A673 (cell line): ENCODE measurements at regions of chr9 and their contacts with region 1.

Region 1: GRCh38 chr9:104104360-104104759 is 10.3 kb downstream of the SMC2 start:
- DNase-seq: no peak
- H3K4me3 ChIP-seq: no peak overlapping the region
- H3K27ac ChIP-seq: no peak overlapping the region
- H3K4me1 ChIP-seq: no peaks in the 10 kb centered on the region
- H3K27me3 ChIP-seq: no peaks in the 10 kb centered on the region
- CTCF ChIP-seq: no peak

Region 2: GRCh38 chr9:103837940-103838339 is 266.4 kb before region 1 on chr9:
- CTCF ChIA-PET with region 1: no interaction called
- POLR2A ChIA-PET with region 1: no interaction called
- intact Hi-C with region 1: no loop called
- DNase-seq: no peak
- H3K4me3 ChIP-seq: no peak overlapping the region
- H3K27ac ChIP-seq: no peak overlapping the region
- H3K4me1 ChIP-seq: no peaks in the 10 kb centered on the region
- H3K27me3 ChIP-seq: no peaks in the 10 kb centered on the region
- CTCF ChIP-seq: no peak

Region 3: DNA sequence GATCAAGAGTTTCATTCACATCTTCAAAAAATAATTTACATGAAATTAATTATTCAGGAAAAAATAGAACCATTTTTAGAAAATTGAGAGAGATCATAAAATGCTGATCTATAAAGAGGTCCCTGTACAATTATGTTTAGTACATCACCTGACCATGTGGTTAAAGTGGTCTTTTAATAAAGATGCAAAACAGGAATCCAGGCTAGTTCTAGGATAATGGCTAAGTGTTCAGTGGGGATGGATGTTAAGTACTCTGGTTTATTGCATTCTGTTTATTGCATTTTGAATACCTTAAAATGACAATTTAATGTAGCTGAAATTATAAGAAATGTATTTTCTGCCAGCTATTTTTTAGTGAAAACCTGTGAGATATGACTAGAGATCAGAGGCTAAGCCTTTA is 82.3 kb before region 1 on chr9:
- CTCF ChIA-PET with region 1: no interaction called
- POLR2A ChIA-PET with region 1: no interaction called
- intact Hi-C with region 1: no loop called
- DNase-seq: no peak
- H3K4me3 ChIP-seq: no peak overlapping the region
- H3K27ac ChIP-seq: no peak overlapping the region
- H3K4me1 ChIP-seq: no peaks in the 10 kb centered on the region
- H3K27me3 ChIP-seq: no peaks in the 10 kb centered on the region
- CTCF ChIP-seq: no peak

Region 4: DNA sequence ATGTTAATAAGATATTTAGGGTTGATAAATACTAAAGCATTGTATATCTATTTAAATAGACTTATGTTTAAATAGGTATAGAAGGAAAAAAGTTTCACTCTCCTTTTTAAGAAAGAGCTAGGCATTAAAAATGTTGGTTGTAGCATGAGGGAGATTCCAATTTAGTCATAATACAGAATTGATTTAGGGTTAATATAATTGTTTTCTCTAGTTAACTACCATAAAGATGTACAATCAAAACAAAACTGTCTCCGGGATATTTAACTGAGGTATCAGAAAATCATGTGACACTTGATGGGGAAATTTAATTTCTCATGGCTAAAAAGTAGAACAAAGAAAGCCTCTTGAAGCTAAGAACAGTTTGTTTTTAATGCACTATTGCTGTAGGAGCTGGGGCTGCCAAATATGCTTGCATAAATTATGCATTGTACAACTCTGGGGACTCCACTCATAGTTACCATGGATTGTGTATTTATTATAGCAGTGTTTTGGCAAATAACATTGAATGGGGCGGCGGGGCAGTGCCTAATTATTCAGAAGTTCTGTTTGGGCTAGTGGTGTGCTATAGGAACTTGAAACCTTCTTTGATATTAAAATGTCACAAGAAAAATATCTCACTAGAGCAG is 34.0 kb after region 1 on chr9:
- CTCF ChIA-PET with region 1: no interaction called
- POLR2A ChIA-PET with region 1: no interaction called
- intact Hi-C with region 1: loop called (anchors 5 kb)
- DNase-seq: no peak
- H3K4me3 ChIP-seq: no peak overlapping the region
- H3K27ac ChIP-seq: no peak overlapping the region
- H3K4me1 ChIP-seq: no peaks in the 10 kb centered on the region
- H3K27me3 ChIP-seq: no peaks in the 10 kb centered on the region
- CTCF ChIP-seq: no peak

Region 5: GRCh38 chr9:104256031-104256709 is 151.8 kb after region 1 on chr9:
- CTCF ChIA-PET with region 1: no interaction called
- POLR2A ChIA-PET with region 1: no interaction called
- intact Hi-C with region 1: no loop called
- DNase-seq: no peak
- H3K4me3 ChIP-seq: no peak overlapping the region
- H3K27ac ChIP-seq: no peak overlapping the region
- H3K4me1 ChIP-seq: no peaks in the 10 kb centered on the region
- H3K27me3 ChIP-seq: no peaks in the 10 kb centered on the region
- CTCF ChIP-seq: no peak

Region 6: DNA sequence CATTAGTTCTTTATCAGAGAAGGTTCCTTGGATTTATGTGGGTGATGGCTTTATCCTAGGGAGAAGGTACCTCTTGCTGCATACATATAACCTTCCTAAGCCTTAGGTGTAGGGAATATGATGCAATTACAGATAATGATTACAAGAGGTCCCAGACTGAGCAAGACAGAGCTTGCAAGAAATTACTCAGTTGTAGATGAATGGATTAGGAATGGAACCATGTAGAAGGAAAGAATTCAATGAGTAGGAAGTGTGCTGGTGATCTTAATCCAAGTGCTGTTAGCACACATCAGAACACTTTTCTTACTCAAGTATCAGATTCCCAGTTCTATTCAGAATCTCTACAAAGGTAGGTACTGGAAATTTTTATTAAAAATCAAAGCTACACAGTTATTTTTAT is 402.2 kb after region 1 on chr9:
- CTCF ChIA-PET with region 1: no interaction called
- POLR2A ChIA-PET with region 1: no interaction called
- intact Hi-C with region 1: no loop called
- DNase-seq: no peak
- H3K4me3 ChIP-seq: no peak overlapping the region
- H3K27ac ChIP-seq: no peak overlapping the region
- H3K4me1 ChIP-seq: no peaks in the 10 kb centered on the region
- H3K27me3 ChIP-seq: no peaks in the 10 kb centered on the region
- CTCF ChIP-seq: no peak